WTC11 (cell line): ENCODE measurements at regions of chr17 and their contacts with region 1.

Region 1: DNA sequence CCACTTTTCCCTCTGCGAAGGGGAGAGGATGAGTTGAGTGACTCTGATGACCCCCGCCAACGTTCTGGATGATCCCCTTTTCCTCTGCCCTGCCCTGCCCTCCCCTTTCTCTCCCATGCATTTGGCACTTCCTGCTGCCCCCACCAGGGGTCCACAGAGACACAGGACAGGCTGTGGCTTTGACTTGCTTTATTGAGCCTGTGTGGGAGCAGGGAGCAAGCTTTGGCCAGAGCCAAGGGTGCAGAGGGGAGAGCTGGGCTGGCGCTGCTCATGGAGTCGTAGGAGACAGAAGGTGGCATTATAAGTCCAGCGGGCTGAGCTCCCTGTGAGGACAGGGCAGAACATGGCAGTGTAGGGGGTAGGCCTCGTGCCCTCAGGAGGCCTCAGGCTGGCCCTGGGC is 1.6 kb downstream of the PPY start:
- DNase-seq: peak; percentile 77
- ATAC-seq: peak; percentile 74
- H3K4me3 Mint-ChIP-seq: no peak overlapping the region
- H3K27ac Mint-ChIP-seq: no peak overlapping the region
- H3K4me1 Mint-ChIP-seq: peaks cover 20% of the 10 kb centered on the region
- H3K27me3 Mint-ChIP-seq: peaks cover 46% of the 10 kb centered on the region
- CTCF ChIP-seq: peak; percentile 56

Region 2: GRCh38 chr17:43840814-43841213 is 99.8 kb before region 1 on chr17:
- CTCF ChIA-PET with region 1: interaction called, 16 read pairs
- POLR2A ChIA-PET with region 1: no interaction called
- DNase-seq: no peak
- ATAC-seq: peak; percentile 65
- H3K4me3 Mint-ChIP-seq: no peak overlapping the region
- H3K27ac Mint-ChIP-seq: no peak overlapping the region
- H3K4me1 Mint-ChIP-seq: peaks cover 12% of the 10 kb centered on the region
- H3K27me3 Mint-ChIP-seq: no peaks in the 10 kb centered on the region
- CTCF ChIP-seq: no peak

Region 3: DNA sequence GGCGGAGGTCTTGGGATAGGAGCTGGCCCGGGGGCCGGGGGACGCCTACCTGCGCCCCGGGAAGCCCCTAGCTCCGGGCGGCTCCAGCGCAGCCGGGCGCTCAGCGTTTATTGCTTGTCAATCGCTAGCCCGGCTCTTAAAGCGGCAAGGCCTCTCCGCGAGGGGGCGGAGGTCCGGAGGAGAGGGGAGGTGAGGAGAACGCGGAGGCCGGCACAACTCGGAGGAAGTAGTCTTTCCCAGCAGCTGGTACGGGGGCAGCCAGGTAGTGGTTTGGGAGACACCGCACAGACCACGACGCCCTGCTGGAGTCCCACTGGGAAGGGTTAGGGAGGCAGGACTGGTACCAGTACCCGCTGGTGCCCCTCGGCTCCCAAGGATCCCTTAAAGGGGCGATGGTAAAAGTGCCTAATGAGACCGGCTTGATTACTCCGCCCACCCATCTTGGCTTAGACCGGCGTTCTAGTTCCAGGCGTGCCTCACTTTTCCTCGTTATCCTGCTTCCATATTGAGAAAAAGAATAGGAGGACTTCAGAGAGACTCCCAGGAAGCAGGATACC is 33.1 kb before region 1 on chr17 and contains the start of gene MPP2:
- CTCF ChIA-PET with region 1: interaction called, 49 read pairs
- POLR2A ChIA-PET with region 1: no interaction called
- DNase-seq: peak; percentile 88
- ATAC-seq: peak; percentile 16
- H3K4me3 Mint-ChIP-seq: peak within 1 kb of the TSS; percentile 90
- H3K27ac Mint-ChIP-seq: no peak within 1 kb of the TSS
- H3K4me1 Mint-ChIP-seq: peaks cover 26% of the 10 kb centered on the region
- H3K27me3 Mint-ChIP-seq: peaks cover 49% of the 10 kb centered on the region
- CTCF ChIP-seq: no peak
- total RNA-seq, gene MPP2: 29.3 to 31.4 TPM (median 29.9 TPM) in 3 replicates

Region 4: DNA sequence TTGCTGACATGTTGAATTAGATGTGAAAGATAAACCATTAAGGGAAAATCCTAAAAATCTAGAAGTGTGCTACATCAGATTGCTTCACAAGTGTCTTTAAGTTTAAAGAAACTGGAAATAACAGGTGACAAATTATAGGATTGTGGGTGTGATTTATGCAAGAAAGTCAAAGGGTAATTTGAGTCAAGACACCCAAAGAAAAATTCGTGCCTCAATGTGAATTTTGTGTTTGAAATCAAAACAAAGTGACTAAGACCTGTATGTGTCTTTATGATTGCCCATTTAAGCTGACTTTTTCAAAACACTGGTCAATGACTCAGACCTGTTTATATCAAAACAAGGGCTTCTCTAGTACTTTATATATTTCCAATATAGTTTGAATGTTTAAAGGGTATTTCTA is 18.3 kb after region 1 on chr17:
- CTCF ChIA-PET with region 1: interaction called, 28 read pairs
- POLR2A ChIA-PET with region 1: no interaction called
- DNase-seq: no peak
- ATAC-seq: no peak
- H3K4me3 Mint-ChIP-seq: no peak overlapping the region
- H3K27ac Mint-ChIP-seq: no peak overlapping the region
- H3K4me1 Mint-ChIP-seq: no peaks in the 10 kb centered on the region
- H3K27me3 Mint-ChIP-seq: peaks cover 18% of the 10 kb centered on the region
- CTCF ChIP-seq: no peak

Region 5: GRCh38 chr17:43994272-43995149 is 53.9 kb after region 1 on chr17:
- CTCF ChIA-PET with region 1: interaction called, 118 read pairs
- POLR2A ChIA-PET with region 1: interaction called, 3 read pairs
- DNase-seq: peak; percentile 85
- ATAC-seq: peak; percentile 86
- H3K4me3 Mint-ChIP-seq: peak overlapping the region; percentile 59
- H3K27ac Mint-ChIP-seq: no peak overlapping the region
- H3K4me1 Mint-ChIP-seq: peaks cover 8% of the 10 kb centered on the region
- H3K27me3 Mint-ChIP-seq: peaks cover 13% of the 10 kb centered on the region; the same call in 1 of the 2 replicates
- CTCF ChIP-seq: peak; percentile 92

Region 6: DNA sequence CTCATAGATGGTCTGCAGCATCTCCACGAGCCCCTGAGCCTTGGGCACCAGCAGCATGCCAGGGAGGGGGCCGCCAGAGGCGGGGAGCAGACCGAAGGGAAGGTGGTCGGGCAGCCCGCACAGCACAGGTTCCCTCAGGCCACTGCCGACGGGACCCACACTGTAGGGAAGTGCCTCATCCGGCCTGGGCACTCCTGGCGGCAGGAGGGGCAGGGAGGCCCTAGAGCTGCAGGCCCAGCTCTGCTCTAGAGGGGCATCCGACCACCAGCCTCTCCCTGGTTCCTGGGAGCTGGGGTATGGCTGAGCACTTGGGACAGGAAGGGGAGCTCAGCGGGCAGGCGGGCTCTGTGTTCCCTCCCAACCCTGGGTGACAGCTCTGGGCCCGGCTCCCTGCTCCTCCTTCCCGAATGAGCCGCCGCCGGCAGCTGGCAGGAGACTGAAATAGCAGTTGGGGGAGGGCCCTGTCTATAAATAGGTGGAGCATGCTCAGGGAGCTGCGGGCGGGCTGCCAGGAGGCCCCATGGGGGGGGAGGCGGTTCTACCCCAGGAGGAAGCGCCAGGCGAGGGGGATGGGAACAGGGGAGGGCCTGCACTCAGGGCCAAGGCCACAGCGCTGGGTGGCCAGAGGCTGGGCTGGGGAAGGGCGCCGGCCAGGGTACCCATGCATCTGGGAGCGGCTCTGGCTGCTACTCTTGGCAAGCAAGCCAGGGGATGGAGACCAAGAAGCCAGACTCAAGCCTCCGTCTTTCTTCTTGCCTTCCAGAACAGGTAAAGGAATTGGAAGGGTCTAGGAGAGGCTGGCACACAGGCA is 170.4 kb after region 1 on chr17:
- CTCF ChIA-PET with region 1: interaction called, 12 read pairs
- POLR2A ChIA-PET with region 1: no interaction called
- DNase-seq: peak; percentile 82
- ATAC-seq: peak; percentile 75
- H3K4me3 Mint-ChIP-seq: peak overlapping the region; percentile 49
- H3K27ac Mint-ChIP-seq: no peak overlapping the region
- H3K4me1 Mint-ChIP-seq: peaks cover 48% of the 10 kb centered on the region
- H3K27me3 Mint-ChIP-seq: no peaks in the 10 kb centered on the region
- CTCF ChIP-seq: no peak